Calu3 (cell line): ENCODE measurements at regions of chr3 and their contacts with region 1.

Region 1: DNA sequence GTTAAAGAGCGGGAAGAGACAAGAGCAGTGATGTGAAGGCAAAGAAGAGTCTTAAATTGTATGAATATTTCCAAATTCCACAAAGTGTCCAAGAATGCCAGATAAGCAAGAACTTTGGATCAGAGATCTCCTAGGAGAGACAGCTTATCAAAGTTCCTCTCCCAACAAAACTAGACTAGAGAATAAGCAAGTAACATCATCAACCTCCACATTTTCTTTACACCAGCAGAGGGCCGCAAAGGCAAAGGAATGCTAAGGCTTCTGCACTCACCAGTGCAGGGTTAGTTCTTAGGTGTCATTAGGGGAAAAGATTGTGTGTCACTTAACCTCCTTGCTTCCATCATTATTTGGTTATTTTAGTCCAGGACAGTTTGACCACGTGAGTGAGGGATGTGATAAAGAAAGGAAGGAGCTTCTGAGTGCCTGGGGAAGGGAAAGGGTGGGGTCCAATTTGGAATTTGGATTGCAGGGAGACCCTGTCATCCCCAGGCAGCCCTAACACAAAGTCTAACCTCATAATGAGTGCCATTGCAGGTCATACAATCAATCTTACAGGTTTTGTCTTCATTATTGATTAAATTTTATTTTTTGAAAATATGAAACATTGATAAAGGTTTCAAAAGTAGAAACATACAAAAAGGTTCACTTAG is 7.5 kb upstream of the CMTM6 start:
- DNase-seq: peak; percentile 62
- H3K4me3 Mint-ChIP-seq: no peak overlapping the region
- H3K27ac Mint-ChIP-seq: no peak overlapping the region
- H3K4me1 Mint-ChIP-seq: peaks cover 7% of the 10 kb centered on the region
- H3K27me3 Mint-ChIP-seq: no peaks in the 10 kb centered on the region
- CTCF ChIP-seq: peak; percentile 51

Region 2: DNA sequence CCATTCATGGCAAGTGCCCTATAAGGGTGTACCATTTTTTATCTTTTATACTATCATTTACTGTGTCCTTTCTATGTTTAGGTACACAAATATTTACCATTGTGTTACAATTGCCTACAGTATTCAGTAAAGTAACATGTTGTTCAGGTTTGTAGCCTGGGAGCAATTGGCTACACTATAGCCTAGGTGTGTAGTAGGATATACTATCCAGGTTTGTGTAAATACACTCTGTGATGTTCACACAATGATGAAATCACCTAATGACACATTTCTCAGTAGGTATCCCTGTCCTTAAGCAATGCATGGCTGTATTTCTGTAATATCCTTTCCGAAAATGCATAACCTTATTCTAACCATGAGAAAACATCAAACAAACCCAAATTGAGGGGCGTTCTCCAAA is 156.9 kb after region 1 on chr3:
- CTCF ChIA-PET with region 1: no interaction called
- intact Hi-C with region 1: loop called (anchors 1 kb)
- DNase-seq: no peak
- H3K4me3 Mint-ChIP-seq: no peak overlapping the region
- H3K27ac Mint-ChIP-seq: no peak overlapping the region
- H3K4me1 Mint-ChIP-seq: no peaks in the 10 kb centered on the region
- H3K27me3 Mint-ChIP-seq: peaks cover 16% of the 10 kb centered on the region
- CTCF ChIP-seq: no peak